Calu3 (cell line): ENCODE measurements at regions of chr2 and their contacts with region 1.

Region 1: GRCh38 chr2:191521608-191522208 is 156.2 kb upstream of the NABP1 start:
- DNase-seq: no peak
- H3K4me3 Mint-ChIP-seq: no peak overlapping the region
- H3K27ac Mint-ChIP-seq: no peak overlapping the region
- H3K4me1 Mint-ChIP-seq: no peaks in the 10 kb centered on the region
- H3K27me3 Mint-ChIP-seq: no peaks in the 10 kb centered on the region
- CTCF ChIP-seq: peak; percentile 78

Region 2: GRCh38 chr2:191051825-191052778 is 469.6 kb before region 1 on chr2:
- CTCF ChIA-PET with region 1: interaction called, 5 read pairs
- intact Hi-C with region 1: loop called (anchors 1 kb)
- DNase-seq: peak; percentile 13
- H3K4me3 Mint-ChIP-seq: no peak overlapping the region
- H3K27ac Mint-ChIP-seq: no peak overlapping the region
- H3K4me1 Mint-ChIP-seq: no peaks in the 10 kb centered on the region
- H3K27me3 Mint-ChIP-seq: no peaks in the 10 kb centered on the region
- CTCF ChIP-seq: peak; percentile 56